Calu3 (cell line): ENCODE measurements at regions of chr16 and their contacts with region 1.

Region 1: GRCh38 chr16:57648590-57649442 is 19.3 kb upstream of the ADGRG3 start:
- DNase-seq: peak; percentile 92
- H3K4me3 Mint-ChIP-seq: no peak overlapping the region
- H3K27ac Mint-ChIP-seq: peak overlapping the region; percentile 64
- H3K4me1 Mint-ChIP-seq: peaks cover 21% of the 10 kb centered on the region
- H3K27me3 Mint-ChIP-seq: no peaks in the 10 kb centered on the region
- CTCF ChIP-seq: peak; percentile 100

Region 2: GRCh38 chr16:57576429-57576870 is 72.4 kb before region 1 on chr16:
- CTCF ChIA-PET with region 1: no interaction called
- intact Hi-C with region 1: loop called (anchors 1 kb)
- DNase-seq: peak; percentile 82
- H3K4me3 Mint-ChIP-seq: no peak overlapping the region
- H3K27ac Mint-ChIP-seq: no peak overlapping the region
- H3K4me1 Mint-ChIP-seq: peaks cover 8% of the 10 kb centered on the region
- H3K27me3 Mint-ChIP-seq: peaks cover 35% of the 10 kb centered on the region
- CTCF ChIP-seq: peak; percentile 98

Region 3: GRCh38 chr16:57600048-57600835 is 48.6 kb before region 1 on chr16:
- CTCF ChIA-PET with region 1: interaction called, 25 read pairs
- intact Hi-C with region 1: loop called (anchors 1 kb)
- DNase-seq: peak; percentile 88
- H3K4me3 Mint-ChIP-seq: no peak overlapping the region
- H3K27ac Mint-ChIP-seq: no peak overlapping the region
- H3K4me1 Mint-ChIP-seq: no peaks in the 10 kb centered on the region
- H3K27me3 Mint-ChIP-seq: peaks cover 14% of the 10 kb centered on the region
- CTCF ChIP-seq: peak; percentile 94

Region 4: DNA sequence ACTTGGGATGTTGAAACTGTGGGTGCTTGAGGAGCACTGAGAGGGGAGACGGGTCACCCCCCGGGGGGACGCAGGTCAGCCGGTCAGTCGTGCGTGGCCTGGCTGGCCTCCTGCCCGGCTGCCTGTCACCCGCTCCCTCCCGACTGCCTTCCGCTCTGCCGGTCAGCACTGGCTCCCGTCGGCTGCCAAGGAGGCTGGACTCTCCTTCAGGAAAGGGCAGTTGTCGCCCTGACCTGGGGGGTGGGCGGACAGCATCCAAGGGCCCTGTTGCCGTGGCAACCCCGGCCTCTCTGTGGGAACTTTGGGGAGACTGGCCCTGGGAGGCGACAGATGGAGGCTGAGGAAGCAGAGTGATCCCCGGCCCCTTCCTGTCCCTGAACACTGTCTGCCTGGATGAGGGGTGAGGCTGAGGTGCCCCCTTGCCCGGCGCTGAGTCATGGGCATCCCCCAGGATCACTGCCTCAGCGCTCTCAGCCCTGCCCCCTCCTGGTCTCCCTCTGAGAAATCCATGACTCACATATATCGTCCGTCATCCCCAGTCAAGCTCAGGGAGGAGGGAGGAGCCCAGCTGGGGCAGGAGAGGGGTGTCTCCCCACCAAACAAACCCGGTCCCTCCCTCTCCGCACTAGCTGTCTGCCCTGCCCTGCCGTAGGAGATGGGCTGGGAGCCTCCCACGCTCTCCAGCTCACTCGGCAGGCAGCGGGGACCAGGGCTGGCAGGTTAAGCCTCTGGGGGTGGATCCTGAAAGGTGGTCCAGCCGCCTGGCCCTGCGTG is 20.6 kb before region 1 on chr16 and contains the start of gene ADGRG1:
- CTCF ChIA-PET with region 1: interaction called, 16 read pairs
- intact Hi-C with region 1: loop called (anchors 1 kb)
- DNase-seq: peak; percentile 90
- H3K4me3 Mint-ChIP-seq: peak within 1 kb of the TSS; percentile 67
- H3K27ac Mint-ChIP-seq: peak within 1 kb of the TSS; percentile 73
- H3K4me1 Mint-ChIP-seq: peaks cover 74% of the 10 kb centered on the region
- H3K27me3 Mint-ChIP-seq: no peaks in the 10 kb centered on the region
- CTCF ChIP-seq: peak; percentile 30
- total RNA-seq, gene ADGRG1: 269 and 278 TPM in 2 replicates

Region 5: DNA sequence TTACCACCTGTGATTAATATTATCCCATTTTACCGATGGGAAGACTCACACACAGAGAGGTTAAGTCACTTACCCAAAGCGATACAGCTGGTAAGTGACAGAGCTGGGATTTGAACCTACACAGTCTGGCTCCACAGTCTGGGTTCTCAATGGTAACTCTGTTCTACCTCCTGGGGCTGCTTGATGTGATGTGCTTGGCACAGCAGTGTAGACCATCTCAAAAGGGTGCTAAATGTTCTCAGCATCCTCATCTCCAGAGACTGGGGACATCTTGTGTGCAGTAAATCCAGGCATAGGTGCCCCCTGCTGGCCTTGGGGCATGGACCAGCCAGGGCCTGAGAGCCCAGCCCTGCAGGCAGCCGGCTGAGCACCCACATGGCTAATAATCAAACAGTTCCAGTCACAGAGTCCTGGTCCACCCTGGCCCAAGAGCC is 71.3 kb after region 1 on chr16:
- CTCF ChIA-PET with region 1: no interaction called
- intact Hi-C with region 1: loop called (anchors 2 kb)
- DNase-seq: peak; percentile 90
- H3K4me3 Mint-ChIP-seq: no peak overlapping the region
- H3K27ac Mint-ChIP-seq: no peak overlapping the region
- H3K4me1 Mint-ChIP-seq: no peaks in the 10 kb centered on the region
- H3K27me3 Mint-ChIP-seq: peaks cover 34% of the 10 kb centered on the region
- CTCF ChIP-seq: peak; percentile 68